ENCODE measurements at regions of chr3 and their contacts with region 1.

Region 1: DNA sequence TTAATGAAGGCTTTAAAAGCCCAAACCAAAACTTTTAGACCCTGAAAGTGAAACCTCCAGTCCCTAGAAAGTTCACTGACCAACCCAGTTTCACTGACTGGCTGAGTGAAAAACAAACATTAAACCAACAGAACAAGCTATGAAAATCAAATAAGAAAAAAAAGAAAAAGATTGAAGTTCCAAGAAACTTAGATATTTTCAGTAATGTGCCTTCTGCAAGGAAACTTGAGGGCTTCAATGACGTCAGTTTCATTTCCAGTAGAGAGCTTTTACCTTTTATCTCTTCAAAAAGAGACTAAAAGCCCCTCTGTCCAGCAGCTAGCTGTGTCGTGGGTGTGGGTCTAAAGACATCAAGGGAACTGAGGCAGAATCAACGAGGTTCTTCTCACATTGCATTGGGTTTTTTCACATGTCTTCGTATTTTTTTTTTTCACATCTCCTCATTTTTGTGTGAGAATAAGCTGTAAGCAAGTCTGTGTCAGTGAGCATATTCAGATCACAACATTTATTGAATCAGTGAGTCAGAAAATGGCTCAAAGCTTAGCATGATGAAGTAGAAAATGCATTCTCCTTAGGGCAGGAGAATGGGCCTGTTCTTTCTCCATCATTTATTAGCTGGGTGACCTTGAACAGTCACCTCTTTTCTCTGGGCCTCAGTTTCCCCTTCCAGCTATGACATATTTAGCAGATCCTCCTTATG is 54.8 kb upstream of the BCL6 start:
- DNase-seq: no peak
- H3K4me3 ChIP-seq: no peak overlapping the region
- H3K4me3 Mint-ChIP-seq: no peak overlapping the region
- H3K27ac ChIP-seq: no peak overlapping the region
- H3K27ac Mint-ChIP-seq: peak overlapping the region in 1 of 7 donors; percentile 33
- H3K4me1 ChIP-seq: peaks cover 5 to 10% of the 10 kb centered on the region in 2 donors
- H3K4me1 Mint-ChIP-seq: peaks cover 19% of the 10 kb centered on the region
- H3K27me3 ChIP-seq: no peaks in the 10 kb centered on the region
- H3K27me3 Mint-ChIP-seq: peaks cover 2 to 10% (median 6%) of the 10 kb centered on the region in 3 donors
- CTCF ChIP-seq: no peak

Region 2: DNA sequence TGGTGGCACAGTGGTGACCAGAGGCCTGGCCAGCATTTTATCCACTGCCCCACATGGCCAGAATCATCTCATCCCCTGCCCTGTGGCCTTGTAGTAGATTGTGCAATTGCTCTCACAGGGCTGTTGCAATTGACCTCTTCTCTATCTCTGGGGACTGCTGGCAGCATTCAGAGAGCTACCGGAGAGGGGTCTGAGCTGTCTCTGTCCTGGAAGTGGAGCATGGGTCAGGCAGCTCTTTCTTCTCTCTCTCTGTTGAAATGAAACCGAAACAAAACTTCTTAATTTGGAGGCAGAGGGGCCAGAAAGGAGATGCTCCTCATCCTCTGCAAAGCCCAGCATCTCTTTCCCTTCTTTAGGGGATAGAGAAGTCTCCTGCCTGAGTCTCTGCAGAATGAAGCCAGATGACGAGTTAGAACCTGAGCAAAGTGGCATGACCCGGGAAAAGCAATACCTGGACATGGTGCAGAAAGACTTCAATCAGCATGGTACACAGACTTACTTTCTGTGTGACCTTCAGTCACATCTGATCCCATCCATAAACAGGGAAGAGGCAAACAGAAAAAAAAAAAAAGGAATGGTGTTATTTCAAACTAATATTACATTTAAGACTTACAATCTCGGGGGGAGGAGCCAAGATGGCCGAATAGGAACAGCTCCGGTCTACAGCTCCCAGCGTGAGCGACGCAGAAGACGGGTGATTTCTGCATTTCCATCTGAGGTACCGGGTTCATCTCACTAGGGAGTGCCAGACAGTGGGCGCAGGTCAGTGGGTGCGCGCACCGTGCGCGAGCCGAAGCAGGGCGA is 89.7 kb after region 1 on chr3:
- intact Hi-C with region 1: loop called in 1 of 2 experiments (anchors 10 kb)
- DNase-seq: peak; percentile 34 to 62 (median 54)
- H3K4me3 ChIP-seq: peak overlapping the region in 1 of 3 experiments; percentile 40
- H3K4me3 Mint-ChIP-seq: peak overlapping the region; percentile 28 to 67
- H3K27ac ChIP-seq: peak overlapping the region in 1 of 2 donors; percentile 3
- H3K27ac Mint-ChIP-seq: peak overlapping the region in 6 of 7 donors; percentile 15 to 88 (median 76)
- H3K4me1 ChIP-seq: peaks cover 11 to 15% of the 10 kb centered on the region in 2 donors
- H3K4me1 Mint-ChIP-seq: peaks cover 16% of the 10 kb centered on the region
- H3K27me3 ChIP-seq: no peaks in the 10 kb centered on the region
- H3K27me3 Mint-ChIP-seq: no peaks in the 10 kb centered on the region
- CTCF ChIP-seq: no peak